Activated CD4-positive, alpha-beta memory T cell treated with anti-CD3 and anti-CD28 coated beads, Interleukin-2, amount 10 ng/mL, durations not matched to agents 7 days and 5 days (primary cell): ENCODE measurements at regions of chr4 and their contacts with region 1.

Region 1: DNA sequence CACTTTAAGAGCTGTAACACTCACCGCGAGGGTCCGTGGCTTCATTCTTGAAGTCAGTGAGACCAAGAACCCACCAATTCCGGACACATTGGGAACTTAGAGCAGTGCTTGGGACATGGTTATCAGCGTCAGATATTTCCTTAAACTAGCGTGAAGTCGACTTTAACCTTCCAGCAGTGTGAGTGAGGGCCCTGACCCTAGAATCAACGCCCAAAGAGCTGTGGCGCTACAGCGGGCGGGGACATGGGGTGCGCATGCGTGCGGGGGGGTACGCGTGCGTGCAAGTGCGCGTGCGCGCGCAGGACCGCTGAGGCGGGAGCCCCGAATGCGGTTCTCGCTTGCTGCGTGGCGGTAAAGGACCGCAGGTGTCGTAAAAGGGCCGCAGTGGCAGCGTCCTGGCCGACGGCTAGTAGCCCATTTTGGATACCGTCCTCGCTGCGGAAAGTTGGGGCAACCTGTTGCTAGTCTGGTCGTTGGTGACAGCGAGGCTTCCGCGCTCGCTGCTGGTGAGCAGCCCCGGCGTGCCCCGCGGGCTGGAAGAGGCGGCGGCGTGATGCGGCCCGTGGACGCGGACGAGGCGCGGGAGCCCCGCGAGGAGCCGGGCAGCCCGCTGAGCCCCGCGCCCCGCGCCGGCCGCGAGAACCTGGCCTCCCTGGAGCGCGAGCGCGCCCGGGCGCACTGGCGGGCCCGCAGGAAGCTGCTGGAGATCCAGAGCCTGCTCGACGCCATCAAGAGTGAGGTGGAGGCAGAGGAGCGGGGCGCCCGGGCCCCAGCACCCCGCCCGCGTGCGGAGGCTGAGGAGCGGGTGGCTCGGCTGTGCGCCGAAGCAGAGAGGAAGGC is 19.8 kb upstream of the S100P start:
- DNase-seq: peak; percentile 95
- H3K4me3 Mint-ChIP-seq: peak overlapping the region; percentile 97
- H3K27ac Mint-ChIP-seq: peak overlapping the region; percentile 96
- H3K4me1 Mint-ChIP-seq: peaks cover 48% of the 10 kb centered on the region
- H3K27me3 Mint-ChIP-seq: no peaks in the 10 kb centered on the region

Region 2: GRCh38 chr4:6640292-6641163 is 33.4 kb before region 1 on chr4 and contains the start of gene MRFAP1:
- CTCF ChIA-PET with region 1: interaction called, 22 read pairs
- POLR2A ChIA-PET with region 1: interaction called, 145 read pairs
- DNase-seq: peak; percentile 96
- H3K4me3 Mint-ChIP-seq: peak within 1 kb of the TSS; percentile 98
- H3K27ac Mint-ChIP-seq: peak within 1 kb of the TSS; percentile 100
- H3K4me1 Mint-ChIP-seq: peaks cover 23% of the 10 kb centered on the region
- H3K27me3 Mint-ChIP-seq: no peaks in the 10 kb centered on the region
- total RNA-seq, gene MRFAP1: 142 to 144 TPM

Region 3: DNA sequence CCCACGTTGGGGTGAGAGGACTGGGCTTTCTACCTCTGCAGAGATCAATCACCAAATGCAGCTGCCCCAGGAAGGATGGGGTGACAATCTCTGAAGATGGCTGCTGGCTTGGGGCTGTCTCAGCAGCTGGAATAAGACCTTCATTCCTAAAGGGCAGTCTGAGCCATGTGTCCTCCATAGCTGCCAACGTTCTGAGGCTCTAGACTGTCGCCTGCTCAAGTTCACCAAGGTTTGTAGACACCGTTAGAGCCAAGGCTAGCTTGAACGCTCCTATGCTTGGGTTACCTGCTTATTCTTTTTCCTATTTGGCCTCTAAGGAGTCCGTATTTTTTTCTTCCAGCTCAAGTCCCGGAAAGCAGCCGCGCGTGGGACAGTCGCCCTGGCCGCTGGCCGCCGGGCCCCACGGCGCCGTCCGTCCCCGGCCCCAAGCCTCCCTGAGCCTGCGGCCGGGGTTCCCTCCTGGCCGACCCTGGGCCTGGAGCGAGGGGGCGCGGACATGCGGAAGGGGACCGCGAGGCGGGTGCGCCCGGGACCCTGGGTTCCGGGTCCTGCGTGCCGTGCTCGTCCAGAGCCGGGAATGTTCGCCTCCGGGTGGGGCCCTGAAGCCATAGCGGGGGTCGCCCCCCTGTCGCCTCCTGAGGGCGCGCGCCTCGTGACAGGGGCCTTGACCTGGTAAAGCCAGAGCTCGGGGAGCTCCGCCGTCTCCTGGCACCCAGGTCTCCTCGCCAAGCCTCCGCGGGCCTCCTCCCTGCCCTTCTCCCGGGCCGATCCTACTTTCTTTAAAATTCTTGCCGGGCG is 10.1 kb before region 1 on chr4:
- CTCF ChIA-PET with region 1: interaction called, 8 read pairs
- POLR2A ChIA-PET with region 1: interaction called, 20 read pairs
- DNase-seq: no peak
- H3K4me3 Mint-ChIP-seq: peak overlapping the region; percentile 32
- H3K27ac Mint-ChIP-seq: no peak overlapping the region
- H3K4me1 Mint-ChIP-seq: peaks cover 5% of the 10 kb centered on the region
- H3K27me3 Mint-ChIP-seq: peaks cover 39% of the 10 kb centered on the region

Region 4: GRCh38 chr4:6701371-6701770 is 27.5 kb after region 1 on chr4:
- CTCF ChIA-PET with region 1: interaction called, 180 read pairs
- POLR2A ChIA-PET with region 1: interaction called, 374 read pairs
- DNase-seq: peak; percentile 57
- H3K4me3 Mint-ChIP-seq: no peak overlapping the region
- H3K27ac Mint-ChIP-seq: no peak overlapping the region
- H3K4me1 Mint-ChIP-seq: peaks cover 79% of the 10 kb centered on the region
- H3K27me3 Mint-ChIP-seq: no peaks in the 10 kb centered on the region

Region 5: GRCh38 chr4:6716018-6716911 is 42.4 kb after region 1 on chr4 and contains the start of gene BLOC1S4:
- CTCF ChIA-PET with region 1: interaction called, 74 read pairs
- POLR2A ChIA-PET with region 1: interaction called, 84 read pairs
- DNase-seq: peak; percentile 91
- H3K4me3 Mint-ChIP-seq: peak within 1 kb of the TSS; percentile 88
- H3K27ac Mint-ChIP-seq: peak within 1 kb of the TSS; percentile 87
- H3K4me1 Mint-ChIP-seq: peaks cover 36% of the 10 kb centered on the region
- H3K27me3 Mint-ChIP-seq: no peaks in the 10 kb centered on the region
- total RNA-seq, gene BLOC1S4: 22.9 to 23.2 TPM

Region 6: DNA sequence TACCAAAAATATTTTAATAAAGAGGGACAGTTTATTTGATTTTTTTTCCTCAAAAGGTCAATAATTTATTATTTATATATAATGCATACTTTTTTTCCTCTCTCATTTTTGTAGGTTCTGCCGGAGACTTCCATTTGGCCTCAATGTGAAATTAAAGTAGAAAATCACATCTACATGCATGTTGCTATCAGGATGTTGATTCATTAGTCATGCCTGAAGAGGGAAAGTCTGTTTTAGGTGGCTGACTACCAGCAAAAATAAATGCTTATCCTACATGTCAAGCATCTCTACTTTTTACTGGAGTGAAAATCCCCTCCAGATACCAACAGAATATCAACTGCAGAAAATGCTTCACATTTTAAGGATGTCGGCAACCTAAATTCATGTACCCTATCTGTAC is 150.2 kb after region 1 on chr4:
- CTCF ChIA-PET with region 1: no interaction called
- POLR2A ChIA-PET with region 1: no interaction called
- DNase-seq: no peak
- H3K4me3 Mint-ChIP-seq: no peak overlapping the region
- H3K27ac Mint-ChIP-seq: no peak overlapping the region
- H3K4me1 Mint-ChIP-seq: peaks cover 10% of the 10 kb centered on the region
- H3K27me3 Mint-ChIP-seq: no peaks in the 10 kb centered on the region